ENCODE measurements at regions of chr1 and their contacts with region 1.

Region 1: GRCh38 chr1:26035959-26036755 is 9.8 kb downstream of the SLC30A2 start:
- DNase-seq: peak; percentile 96 to 99
- ATAC-seq: peak; percentile 65 to 69
- H3K4me3 ChIP-seq: peak overlapping the region; percentile 77 to 91 (median 86)
- H3K27ac ChIP-seq: peak overlapping the region; percentile 91 to 99 (median 98)
- H3K4me1 ChIP-seq: peaks cover 33% of the 10 kb centered on the region in 2 donors
- H3K27me3 ChIP-seq: no peaks in the 10 kb centered on the region
- CTCF ChIP-seq: peak; percentile 99 to 100 (median 100)
- POLR2A ChIP-seq: peak; percentile 42 to 73

Region 2: GRCh38 chr1:26072305-26072704 is 36.1 kb after region 1 on chr1:
- in situ Hi-C with region 1: no loop called
- intact Hi-C with region 1: loop called (anchors 1 kb)
- DNase-seq: peak; percentile 95 to 97
- ATAC-seq: peak; percentile 51 to 56
- H3K4me3 ChIP-seq: peak overlapping the region in 2 of 4 donors; percentile 29 to 30
- H3K27ac ChIP-seq: peak overlapping the region; percentile 88 to 96 (median 93)
- H3K4me1 ChIP-seq: peaks cover 48 to 72% of the 10 kb centered on the region in 2 donors
- H3K27me3 ChIP-seq: no peaks in the 10 kb centered on the region
- CTCF ChIP-seq: no peak
- POLR2A ChIP-seq: peak in 1 of 2 donors; percentile 59

Region 3: DNA sequence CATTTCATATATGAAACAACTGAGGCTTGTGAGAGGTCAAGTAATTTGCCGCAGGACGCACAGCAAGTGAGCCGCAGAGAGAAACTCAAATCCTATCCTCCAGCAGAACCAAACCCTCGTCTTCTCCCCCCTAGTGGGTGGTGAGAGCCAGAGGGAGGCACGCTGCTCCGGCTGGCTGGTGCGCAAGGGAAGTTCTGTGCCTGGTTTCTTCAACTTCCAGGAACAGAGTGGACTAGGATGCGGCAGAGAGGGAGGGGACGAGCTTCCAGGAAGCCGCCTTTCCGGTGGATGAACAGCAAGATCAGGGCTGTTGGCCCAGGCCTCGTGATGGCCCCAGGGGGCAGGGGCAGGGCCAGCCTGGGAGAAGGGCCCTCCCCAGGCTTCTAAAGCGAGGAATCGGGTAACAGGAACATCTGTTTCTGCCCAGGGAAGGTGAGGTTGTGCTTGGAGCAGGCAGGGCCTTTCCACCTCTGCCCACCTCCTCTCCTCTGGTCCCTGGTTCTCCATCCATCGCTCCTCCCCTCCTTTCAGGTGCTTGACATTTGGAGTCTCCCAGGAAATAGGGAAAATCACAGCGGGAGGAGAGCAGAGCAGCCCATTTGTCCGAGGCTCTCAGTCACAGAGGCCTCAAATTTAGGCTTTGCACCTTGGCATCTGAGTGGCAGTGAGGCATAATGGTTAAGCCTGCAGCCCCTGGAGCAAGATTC is 58.7 kb after region 1 on chr1:
- in situ Hi-C with region 1: no loop called
- intact Hi-C with region 1: loop called (anchors 1 kb)
- DNase-seq: peak; percentile 77 to 84
- ATAC-seq: peak; percentile 82 to 86
- H3K4me3 ChIP-seq: peak overlapping the region; percentile 23 to 43 (median 31)
- H3K27ac ChIP-seq: peak overlapping the region; percentile 84 to 88 (median 84)
- H3K4me1 ChIP-seq: peaks cover 15 to 17% of the 10 kb centered on the region in 2 donors
- H3K27me3 ChIP-seq: no peaks in the 10 kb centered on the region
- CTCF ChIP-seq: peak in 3 of 5 experiments; percentile 32 to 48 (median 40)
- POLR2A ChIP-seq: peak; percentile 41 to 63

Region 4: GRCh38 chr1:26145041-26145959 is 109.1 kb after region 1 on chr1:
- in situ Hi-C with region 1: loop called in 2 of 4 experiments (anchors 10 to 25 kb)
- intact Hi-C with region 1: loop called (anchors 1 kb)
- DNase-seq: peak; percentile 64 to 78
- ATAC-seq: peak; percentile 99 to 100
- H3K4me3 ChIP-seq: no peak overlapping the region
- H3K27ac ChIP-seq: peak overlapping the region in 2 of 4 donors; percentile 37 to 38
- H3K4me1 ChIP-seq: peaks cover 0 to 9% of the 10 kb centered on the region in 2 donors
- H3K27me3 ChIP-seq: no peaks in the 10 kb centered on the region
- CTCF ChIP-seq: peak; percentile 54 to 93 (median 85)
- POLR2A ChIP-seq: no peak

Region 5: GRCh38 chr1:26169669-26170471 is 133.7 kb after region 1 on chr1 and contains the start of gene ZNF593:
- in situ Hi-C with region 1: loop called in 1 of 4 experiments (anchors 25 kb)
- intact Hi-C with region 1: no loop called
- DNase-seq: peak; percentile 91
- ATAC-seq: peak; percentile 91 to 93
- H3K4me3 ChIP-seq: peak within 1 kb of the TSS; percentile 73 to 99 (median 86)
- H3K27ac ChIP-seq: peak within 1 kb of the TSS; percentile 88 to 97 (median 92)
- H3K4me1 ChIP-seq: peaks cover 20 to 26% of the 10 kb centered on the region in 2 donors
- H3K27me3 ChIP-seq: no peaks in the 10 kb centered on the region
- CTCF ChIP-seq: peak; percentile 93 to 97 (median 95)
- POLR2A ChIP-seq: peak; percentile 85 to 91
- total RNA-seq, gene ZNF593: 39.6 to 135 (median 97.3) TPM